ENCODE measurements at regions of chr3 and their contacts with region 1.

Region 1: GRCh38 chr3:62374341-62375218 is 1.2 kb upstream of the FEZF2 start:
- DNase-seq: no peak
- H3K4me3 Mint-ChIP-seq: no peak overlapping the region
- H3K27ac Mint-ChIP-seq: no peak overlapping the region
- H3K4me1 Mint-ChIP-seq: no peaks in the 10 kb centered on the region
- H3K27me3 Mint-ChIP-seq: peaks cover 84% of the 10 kb centered on the region

Region 2: GRCh38 chr3:62318750-62319569 is 55.6 kb before region 1 on chr3:
- intact Hi-C with region 1: no loop called
- DNase-seq: peak; percentile 44
- H3K4me3 Mint-ChIP-seq: peak overlapping the region; percentile 89
- H3K27ac Mint-ChIP-seq: peak overlapping the region; percentile 94
- H3K4me1 Mint-ChIP-seq: peaks cover 11% of the 10 kb centered on the region
- H3K27me3 Mint-ChIP-seq: peaks cover 5% of the 10 kb centered on the region

Region 3: DNA sequence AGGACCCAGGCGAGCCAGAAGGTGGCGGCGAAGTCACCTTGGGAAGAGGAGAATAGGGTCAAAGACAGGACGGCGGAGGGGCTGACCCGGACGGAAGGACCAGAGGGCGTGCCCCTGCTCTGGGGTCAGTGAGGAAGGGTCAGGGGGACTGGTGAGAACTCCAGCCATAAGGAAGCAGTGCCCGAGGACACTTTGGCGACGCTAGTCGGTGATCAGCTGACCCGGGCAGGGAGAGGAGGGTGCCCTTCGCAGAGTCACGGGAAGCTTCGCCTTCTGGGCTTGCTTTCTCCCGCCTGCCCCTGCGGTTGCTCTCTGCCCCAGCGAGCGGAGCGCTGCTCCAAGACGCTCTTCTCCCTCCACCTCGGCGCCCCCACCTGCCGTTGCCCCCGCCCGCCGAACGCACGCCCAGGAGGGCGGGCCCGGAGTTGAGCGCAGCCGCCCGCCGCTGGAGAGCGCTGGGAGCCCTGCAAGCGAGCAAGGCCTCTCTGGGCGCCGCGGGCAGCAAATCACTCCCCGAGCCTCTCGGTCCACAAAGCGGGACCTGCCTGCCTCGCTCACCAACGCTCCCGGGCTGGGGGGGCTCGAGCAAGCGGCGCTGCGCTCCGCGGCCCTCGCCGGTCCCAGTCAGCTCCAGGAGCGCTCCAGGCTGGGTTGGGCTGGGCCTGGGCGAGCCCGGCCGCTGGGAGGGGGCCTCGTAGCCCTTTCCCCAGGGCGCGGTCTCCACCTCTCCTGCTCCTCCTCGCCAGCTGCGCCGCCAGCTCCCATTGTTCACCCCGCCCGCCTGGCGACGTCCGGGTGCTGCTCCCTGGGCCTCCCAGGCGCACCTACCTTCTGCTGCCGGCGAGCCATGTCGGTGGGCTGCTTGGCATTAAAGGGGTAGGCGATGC is 499.4 kb after region 1 on chr3:
- intact Hi-C with region 1: loop called (anchors 10 kb)
- DNase-seq: no peak
- H3K4me3 Mint-ChIP-seq: no peak overlapping the region
- H3K27ac Mint-ChIP-seq: no peak overlapping the region
- H3K4me1 Mint-ChIP-seq: no peaks in the 10 kb centered on the region
- H3K27me3 Mint-ChIP-seq: peaks cover 35% of the 10 kb centered on the region